Sigmoid colon (tissue), 7 donors: ENCODE measurements at regions of chr4 and their contacts with region 1.

Region 1: GRCh38 chr4:128287871-128288688 is 467 bp upstream of the PGRMC2 start:
- DNase-seq: peak; percentile 100
- H3K4me3 ChIP-seq: peak overlapping the region; percentile 75 to 90 (median 88)
- H3K27ac ChIP-seq: peak overlapping the region; percentile 89 to 97 (median 94)
- H3K4me1 ChIP-seq: peaks cover 0 to 38% (median 25%) of the 10 kb centered on the region in 4 donors
- H3K27me3 ChIP-seq: no peaks in the 10 kb centered on the region
- CTCF ChIP-seq: peak in 3 of 4 experiments; percentile 30 to 37 (median 32)
- EP300 ChIP-seq: peak in 2 of 4 donors; percentile 61 to 63
- POLR2A ChIP-seq: peak; percentile 47 to 53

Region 2: GRCh38 chr4:128060699-128061565 is 227.1 kb before region 1 on chr4 and contains the start of gene LARP1B:
- intact Hi-C with region 1: loop called (anchors 5 kb)
- DNase-seq: peak; percentile 97
- H3K4me3 ChIP-seq: peak within 1 kb of the TSS; percentile 86 to 92 (median 88)
- H3K27ac ChIP-seq: peak within 1 kb of the TSS; percentile 98
- H3K4me1 ChIP-seq: peaks cover 0 to 28% (median 17%) of the 10 kb centered on the region in 4 donors
- H3K27me3 ChIP-seq: no peaks in the 10 kb centered on the region
- CTCF ChIP-seq: no peak
- EP300 ChIP-seq: no peak
- POLR2A ChIP-seq: peak; percentile 50 to 75
- total RNA-seq, gene LARP1B: 18.2 to 30.3 (median 20.3) TPM

Region 3: DNA sequence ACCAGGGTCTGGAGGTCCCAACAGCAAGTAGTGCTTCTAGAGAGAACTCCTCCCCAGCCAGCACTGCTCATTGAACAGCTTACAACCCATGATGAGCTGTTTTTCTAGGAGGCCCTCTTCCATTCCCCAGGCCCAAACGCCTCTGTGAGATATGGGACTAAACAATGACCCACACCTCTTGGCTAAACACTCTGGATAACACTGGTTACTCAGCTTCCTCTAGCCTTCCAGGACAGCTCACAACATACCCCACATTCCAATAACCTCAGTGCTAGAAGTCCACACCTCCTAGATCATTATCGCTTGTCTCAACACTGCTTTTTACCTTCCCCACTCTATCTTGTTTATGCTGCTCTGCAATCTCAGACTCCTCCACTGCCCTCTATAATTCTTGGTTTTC is 34.9 kb after region 1 on chr4:
- intact Hi-C with region 1: no loop called
- DNase-seq: no peak
- H3K4me3 ChIP-seq: no peak overlapping the region
- H3K27ac ChIP-seq: no peak overlapping the region
- H3K4me1 ChIP-seq: peaks cover 0 to 5% (median 0%) of the 10 kb centered on the region in 4 donors
- H3K27me3 ChIP-seq: no peaks in the 10 kb centered on the region
- CTCF ChIP-seq: no peak
- EP300 ChIP-seq: no peak
- POLR2A ChIP-seq: no peak

Region 4: DNA sequence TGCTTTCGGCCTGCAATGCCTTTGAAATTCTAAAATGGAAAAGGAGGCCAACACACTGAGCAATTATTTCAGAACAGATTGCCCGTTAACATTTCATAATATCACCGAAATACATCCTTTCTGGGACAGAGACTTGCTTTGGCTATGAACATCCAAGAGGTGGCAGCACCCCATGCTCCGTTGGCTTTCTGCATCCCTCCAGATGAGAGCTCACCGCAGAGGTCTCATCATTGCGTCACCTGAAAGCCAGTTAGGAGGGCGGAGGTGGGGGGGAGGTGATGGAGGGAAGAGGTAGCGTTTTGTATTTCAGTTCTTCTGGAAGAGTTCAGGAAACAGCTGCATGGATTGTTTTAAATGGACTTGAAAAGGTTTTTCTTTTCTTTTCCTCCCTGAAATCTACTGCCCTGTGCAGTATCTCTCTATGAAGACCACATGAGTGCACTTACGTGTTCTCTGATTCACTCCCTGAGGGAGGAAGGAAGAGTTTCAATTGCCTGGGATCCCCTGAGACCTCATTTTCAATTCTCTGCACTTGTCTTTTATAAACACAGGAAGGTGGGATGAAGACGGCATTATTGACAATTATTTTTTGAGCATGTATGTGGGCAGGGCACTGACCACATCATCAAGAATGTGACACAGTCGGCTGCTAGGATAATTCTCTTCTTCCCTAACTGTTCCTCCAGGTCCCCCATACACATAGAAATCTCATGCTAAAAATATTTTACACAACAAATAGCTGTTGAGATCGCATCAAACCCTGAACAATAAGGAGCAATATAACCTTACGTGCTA is 166.4 kb after region 1 on chr4:
- intact Hi-C with region 1: loop called (anchors 5 kb)
- DNase-seq: peak; percentile 95
- H3K4me3 ChIP-seq: no peak overlapping the region
- H3K27ac ChIP-seq: peak overlapping the region in 2 of 4 donors; percentile 27 to 49
- H3K4me1 ChIP-seq: peaks cover 0 to 48% (median 30%) of the 10 kb centered on the region in 4 donors
- H3K27me3 ChIP-seq: no peaks in the 10 kb centered on the region
- CTCF ChIP-seq: peak; percentile 73 to 86 (median 76)
- EP300 ChIP-seq: no peak
- POLR2A ChIP-seq: no peak

Region 5: DNA sequence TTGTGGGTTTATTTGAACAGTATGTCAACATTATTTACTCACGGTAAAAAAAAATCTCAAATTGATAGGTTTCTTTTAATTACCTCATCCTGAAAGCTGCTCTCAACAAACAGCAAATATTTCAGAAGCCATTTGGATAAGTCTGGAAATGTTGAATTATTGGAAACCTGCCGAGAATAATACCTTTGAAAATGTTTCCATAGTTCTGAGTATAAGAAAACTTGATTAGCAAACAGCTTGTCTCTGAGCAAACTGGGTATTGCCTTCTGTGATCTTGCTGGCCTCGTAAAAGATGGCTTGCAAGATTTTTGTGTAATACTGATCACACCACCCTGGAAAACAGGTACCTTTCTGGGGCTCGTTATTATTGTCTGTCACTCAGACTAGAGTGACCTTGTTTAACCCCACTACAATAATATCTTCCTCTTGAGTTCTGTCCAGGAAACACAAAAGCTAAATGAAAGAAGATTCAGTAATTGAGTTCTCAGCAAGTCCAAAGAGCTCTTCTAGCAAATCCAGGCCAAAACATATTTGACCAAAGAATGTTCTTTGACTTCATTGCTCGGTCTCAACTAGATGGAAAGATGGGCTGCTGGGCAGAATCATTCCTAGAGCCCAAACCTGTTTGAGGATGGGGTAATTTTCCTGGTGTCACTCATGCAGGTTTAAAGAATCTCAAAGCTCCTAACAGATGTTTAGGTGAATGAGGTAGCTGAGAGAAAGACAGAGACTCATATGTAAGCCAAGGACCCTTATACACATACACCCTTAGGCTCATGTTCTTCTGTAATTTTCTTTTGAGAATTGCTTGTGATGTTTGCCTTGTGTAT is 265.8 kb after region 1 on chr4:
- intact Hi-C with region 1: loop called (anchors 5 kb)
- DNase-seq: no peak
- H3K4me3 ChIP-seq: peak overlapping the region; percentile 45 to 58 (median 56)
- H3K27ac ChIP-seq: peak overlapping the region; percentile 91 to 92 (median 92)
- H3K4me1 ChIP-seq: peaks cover 0 to 30% (median 21%) of the 10 kb centered on the region in 4 donors
- H3K27me3 ChIP-seq: no peaks in the 10 kb centered on the region
- CTCF ChIP-seq: no peak
- EP300 ChIP-seq: no peak
- POLR2A ChIP-seq: no peak

Region 6: DNA sequence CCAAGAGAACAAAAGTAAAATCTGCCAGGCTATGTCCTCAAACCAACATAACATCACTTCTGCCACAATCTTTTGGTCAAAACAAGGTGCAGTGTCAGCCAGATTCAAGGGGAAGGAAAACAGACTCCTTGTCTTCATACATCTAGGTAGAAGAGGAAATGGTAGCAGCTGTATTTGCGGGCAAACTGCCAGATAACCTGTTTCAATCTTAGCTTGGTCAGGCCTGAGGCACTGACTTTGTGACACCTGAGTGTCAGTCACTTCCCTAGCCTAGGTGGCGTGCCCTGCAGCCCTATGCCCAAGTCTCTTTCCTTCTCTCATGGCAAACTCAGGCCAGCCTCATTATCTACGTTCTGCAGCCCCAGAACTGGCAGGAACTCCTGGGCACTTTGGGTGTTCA is 375.3 kb after region 1 on chr4:
- intact Hi-C with region 1: loop called (anchors 5 kb)
- DNase-seq: no peak
- H3K4me3 ChIP-seq: no peak overlapping the region
- H3K27ac ChIP-seq: no peak overlapping the region
- H3K4me1 ChIP-seq: peaks cover 0 to 50% (median 40%) of the 10 kb centered on the region in 4 donors
- H3K27me3 ChIP-seq: no peaks in the 10 kb centered on the region
- CTCF ChIP-seq: no peak
- EP300 ChIP-seq: no peak
- POLR2A ChIP-seq: no peak

Region 7: GRCh38 chr4:129093191-129093920 is 805.3 kb after region 1 on chr4 and contains the start of gene SCLT1:
- intact Hi-C with region 1: loop called (anchors 5 kb)
- DNase-seq: peak; percentile 99
- H3K4me3 ChIP-seq: peak within 1 kb of the TSS; percentile 77 to 88 (median 78)
- H3K27ac ChIP-seq: peak within 1 kb of the TSS; percentile 96 to 98 (median 96)
- H3K4me1 ChIP-seq: peaks cover 0 to 24% (median 18%) of the 10 kb centered on the region in 4 donors
- H3K27me3 ChIP-seq: no peaks in the 10 kb centered on the region
- CTCF ChIP-seq: no peak
- EP300 ChIP-seq: peak in 1 of 4 donors; percentile 12
- POLR2A ChIP-seq: peak; percentile 61 to 84
- total RNA-seq, gene SCLT1: 9.9 to 18.8 (median 14.0) TPM